ENCODE measurements at regions of chr6 and their contacts with region 1.

Region 1: GRCh38 chr6:73803562-73804241 is 107.7 kb downstream of the CD109 start:
- H3K4me3 ChIP-seq: no peak overlapping the region
- H3K27ac ChIP-seq: no peak overlapping the region
- H3K4me1 ChIP-seq: 0 out of 2 replicates have a peak, but pooled peaks cover 2% of the 10 kb centered on the region
- CTCF ChIP-seq: 0 out of 2 replicates have a peak, but pooled peaks have one; percentile 30

Region 2: GRCh38 chr6:73644941-73645591 is 158.6 kb before region 1 on chr6:
- CTCF ChIA-PET with region 1: no interaction called
- POLR2A ChIA-PET with region 1: no interaction called
- H3K4me3 ChIP-seq: peak overlapping the region; percentile 42
- H3K27ac ChIP-seq: no peak overlapping the region
- H3K4me1 ChIP-seq: no peaks in the 10 kb centered on the region
- CTCF ChIP-seq: no peak

Region 3: DNA sequence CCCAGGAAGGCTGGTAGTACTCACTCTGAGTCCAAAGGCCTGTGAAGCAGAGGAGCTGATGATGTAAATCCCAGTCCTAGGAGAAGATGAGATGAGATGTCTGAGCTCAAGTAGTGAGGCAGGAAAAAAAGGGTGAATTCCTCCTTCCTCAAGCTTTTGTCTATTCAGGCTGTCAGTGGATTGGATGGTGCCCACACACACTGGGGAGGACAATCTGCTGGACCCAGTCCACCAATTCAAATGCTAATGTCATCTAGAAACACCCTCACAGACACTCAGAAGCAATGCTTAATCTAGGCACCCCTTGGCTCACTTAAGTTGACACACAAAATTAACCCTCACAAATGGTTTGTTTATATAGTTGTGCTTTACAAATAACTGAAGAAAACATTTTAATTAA is 13.1 kb before region 1 on chr6:
- CTCF ChIA-PET with region 1: interaction called, 14 read pairs
- POLR2A ChIA-PET with region 1: no interaction called
- H3K4me3 ChIP-seq: no peak overlapping the region
- H3K27ac ChIP-seq: no peak overlapping the region
- H3K4me1 ChIP-seq: no peaks in the 10 kb centered on the region
- CTCF ChIP-seq: no peak